ENCODE measurements at regions of chr6 and their contacts with region 1.

Region 1: DNA sequence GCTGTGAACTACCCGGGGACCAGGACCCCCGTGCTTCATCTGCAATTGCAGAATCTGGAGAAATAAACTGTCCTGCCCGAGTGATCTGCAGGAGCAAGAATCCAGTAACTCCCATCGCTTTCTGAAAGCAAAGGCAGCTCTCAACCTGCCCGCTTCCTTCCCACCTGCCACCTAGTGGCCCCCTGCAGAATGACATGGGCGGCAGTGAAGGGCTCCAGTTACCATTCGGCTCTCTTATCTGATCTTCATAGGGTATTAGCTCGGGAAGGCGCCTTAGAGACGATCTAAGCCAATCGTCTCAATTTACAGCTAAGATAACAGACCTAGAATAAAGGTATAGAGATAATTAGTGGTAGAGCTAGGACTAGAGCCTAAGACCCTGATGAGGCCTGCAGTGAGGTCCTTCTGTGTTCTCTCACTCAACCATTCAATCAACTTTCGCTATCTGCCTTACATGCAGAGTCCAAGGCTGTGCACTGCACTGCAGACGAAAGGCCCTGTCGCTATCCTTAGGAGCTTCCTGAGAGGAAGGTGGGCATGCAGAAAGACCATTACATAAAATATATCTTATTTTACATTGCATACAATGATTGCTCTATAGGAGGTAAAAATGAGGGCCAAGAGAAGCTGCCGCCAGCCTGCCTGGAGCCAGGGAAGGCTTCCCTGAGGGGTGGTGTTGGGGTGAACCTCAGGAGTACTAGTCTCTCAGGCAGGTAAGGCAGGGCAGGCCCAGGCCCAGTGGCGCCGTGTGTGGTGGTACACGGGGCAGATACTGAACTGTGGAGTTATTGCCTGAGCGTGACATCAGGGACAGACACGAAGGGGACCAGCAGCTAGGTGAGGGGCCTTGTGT is 7.1 kb upstream of the PSMG4 start:
- DNase-seq: peak; percentile 87
- CTCF ChIP-seq: peak; percentile 93

Region 2: GRCh38 chr6:3119040-3119723 is 132.5 kb before region 1 on chr6:
- CTCF ChIA-PET with region 1: interaction called, 20 read pairs
- POLR2A ChIA-PET with region 1: no interaction called
- DNase-seq: no peak
- CTCF ChIP-seq: no peak

Region 3: DNA sequence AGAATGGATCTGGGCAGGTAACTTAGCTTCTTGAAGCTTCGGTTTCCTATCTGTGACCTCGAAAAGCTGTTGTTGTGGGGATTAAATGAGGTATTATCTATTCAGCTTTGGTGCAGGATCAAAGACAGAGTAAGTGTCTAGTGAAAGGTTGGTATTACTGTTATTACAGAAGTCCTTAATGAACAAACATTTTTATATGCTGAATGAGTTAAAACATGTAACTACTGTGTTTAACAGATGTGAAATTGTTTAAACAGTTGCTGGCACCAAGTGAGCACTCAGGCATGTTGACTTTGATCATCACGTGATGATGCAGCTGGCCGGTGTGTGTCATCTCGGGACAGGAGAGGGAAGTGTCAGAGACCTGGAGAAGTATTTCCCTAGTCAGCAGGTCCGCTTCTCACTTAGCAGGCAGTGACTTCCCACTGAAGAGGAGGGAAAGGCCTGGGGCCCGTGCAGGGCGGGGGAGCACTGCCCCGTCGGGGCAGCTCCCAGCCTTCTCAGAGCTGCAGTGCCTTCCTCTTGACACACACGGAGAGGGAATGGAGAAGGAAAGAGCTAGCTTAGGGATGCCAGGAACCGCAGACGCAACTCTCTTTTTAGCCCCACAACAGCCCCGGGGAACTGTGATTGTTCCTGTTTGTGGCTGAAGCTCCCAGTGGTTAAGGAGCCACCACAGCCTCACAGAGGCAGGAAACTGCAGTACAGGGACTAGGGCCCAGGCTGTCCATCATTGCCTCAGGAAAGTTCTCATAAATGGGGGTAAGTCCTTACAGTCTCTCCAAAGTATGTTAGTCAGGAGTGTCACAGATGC is 112.4 kb before region 1 on chr6:
- CTCF ChIA-PET with region 1: interaction called, 10 read pairs
- POLR2A ChIA-PET with region 1: no interaction called
- DNase-seq: peak; percentile 47
- CTCF ChIP-seq: no peak

Region 4: GRCh38 chr6:3186974-3187382 is 64.7 kb before region 1 on chr6:
- CTCF ChIA-PET with region 1: interaction called, 17 read pairs
- POLR2A ChIA-PET with region 1: no interaction called
- DNase-seq: no peak
- CTCF ChIP-seq: no peak

Region 5: DNA sequence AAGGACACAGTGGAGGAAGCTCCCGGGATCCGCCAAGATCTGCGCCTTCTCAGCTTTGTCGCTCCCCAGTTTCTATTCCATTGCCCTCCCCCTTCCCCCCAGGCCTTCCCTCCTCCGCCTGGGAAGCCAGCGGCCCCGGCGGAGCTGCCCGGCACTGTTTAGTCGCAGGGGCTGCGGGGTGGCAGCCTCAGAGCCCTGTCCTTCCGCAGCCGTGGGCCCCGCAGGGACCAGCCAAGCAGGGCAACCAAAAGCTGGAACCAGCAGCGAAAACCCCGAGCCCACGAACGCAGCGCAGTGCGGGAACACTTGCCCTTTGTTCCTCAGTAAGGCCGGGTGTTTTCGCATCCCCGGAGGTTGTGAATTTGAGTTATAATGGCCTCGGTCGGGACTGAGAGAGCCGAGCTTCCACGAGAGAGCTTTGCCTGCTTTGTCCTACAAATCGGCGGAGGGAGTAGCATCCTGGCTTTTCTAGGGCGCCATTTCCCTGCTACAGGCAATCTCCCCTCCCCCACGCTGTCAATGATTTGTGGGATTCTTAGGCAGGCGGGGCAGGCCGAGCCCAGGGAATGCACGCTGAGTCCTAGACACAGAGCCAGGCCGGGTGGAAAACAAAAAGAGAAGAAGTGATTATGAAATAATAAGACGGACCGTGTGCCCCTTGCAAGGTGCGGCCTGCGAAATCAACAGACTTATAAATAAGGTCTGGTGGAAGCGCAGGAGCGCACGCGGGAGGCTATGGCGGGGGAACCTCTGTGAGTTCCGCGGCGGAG is 20.3 kb before region 1 on chr6:
- CTCF ChIA-PET with region 1: interaction called, 26 read pairs
- POLR2A ChIA-PET with region 1: no interaction called
- DNase-seq: no peak
- CTCF ChIP-seq: no peak

Region 6: GRCh38 chr6:3265671-3266070 is 14.0 kb after region 1 on chr6:
- CTCF ChIA-PET with region 1: interaction called, 36 read pairs
- POLR2A ChIA-PET with region 1: no interaction called
- DNase-seq: no peak
- CTCF ChIP-seq: no peak

Measured in GM10248 (cell line).